Dorsolateral prefrontal cortex (tissue), 120 donors: ENCODE measurements at regions of chr20 and their contacts with region 1.

Region 1: DNA sequence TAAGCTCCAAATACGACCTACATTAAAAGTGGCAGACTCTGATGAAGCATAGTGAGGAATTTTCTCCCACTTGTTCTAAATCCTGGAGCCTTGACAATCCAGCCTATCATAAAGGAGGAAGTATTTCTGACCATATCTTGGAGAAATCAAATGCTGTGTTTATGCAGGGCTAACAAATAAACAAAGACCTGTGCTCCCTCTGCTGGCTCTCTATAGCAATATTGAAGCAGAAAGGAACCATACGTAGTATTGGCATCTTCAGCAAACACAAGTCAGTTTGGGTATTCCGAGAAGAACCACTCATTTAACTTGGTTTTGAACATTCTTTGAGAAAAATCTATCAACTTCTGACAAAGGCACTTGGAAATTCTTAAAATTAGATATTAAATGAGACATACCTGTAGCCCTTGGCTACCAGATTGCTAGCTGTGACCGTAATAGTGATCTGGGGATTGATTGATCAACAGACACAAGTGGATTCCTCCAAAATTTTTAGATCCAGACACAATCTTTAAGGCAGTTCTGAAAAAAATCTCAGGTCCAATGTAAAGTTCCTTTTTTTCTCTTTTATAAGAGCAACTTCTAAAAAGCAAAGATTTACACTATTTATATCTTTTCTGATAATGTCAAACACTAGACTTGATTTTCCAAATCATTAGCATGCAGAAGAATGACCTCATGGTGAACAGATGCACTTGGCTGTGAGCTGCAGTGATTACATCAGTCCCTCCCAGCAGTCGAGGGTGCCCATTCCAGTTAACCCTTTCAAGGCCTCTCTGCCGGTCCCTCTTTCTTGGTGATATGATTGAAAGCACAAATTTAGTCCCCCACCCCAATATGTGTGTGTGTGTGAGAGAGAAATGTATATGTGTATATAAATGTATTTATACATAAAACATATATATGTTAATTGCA is 40.2 kb downstream of the INSM1 start:
- DNase-seq: peak in 5 of 10 donors; percentile 36 to 68 (median 61)
- H3K4me3 ChIP-seq: peak overlapping the region in 14 of 59 donors; percentile 0 to 45 (median 18)
- H3K27ac ChIP-seq: peak overlapping the region in 54 of 59 donors; percentile 6 to 85 (median 57)
- H3K27me3 ChIP-seq: no peaks in the 10 kb centered on the region
- CTCF ChIP-seq: peak in 49 of 56 donors; percentile 17 to 58 (median 37)

Region 2: GRCh38 chr20:20267685-20268370 is 140.3 kb before region 1 on chr20:
- intact Hi-C with region 1: no loop called
- DNase-seq: no peak
- H3K4me3 ChIP-seq: no peak overlapping the region
- H3K27ac ChIP-seq: no peak overlapping the region
- H3K27me3 ChIP-seq: peaks cover 0 to 4% (median 0%) of the 10 kb centered on the region in 45 donors
- CTCF ChIP-seq: no peak

Region 3: GRCh38 chr20:20369250-20370093 is 38.7 kb before region 1 on chr20:
- intact Hi-C with region 1: loop called (anchors 2 kb)
- DNase-seq: peak in 4 of 10 donors; percentile 13 to 83 (median 54)
- H3K4me3 ChIP-seq: peak overlapping the region; percentile 32 to 76 (median 62)
- H3K27ac ChIP-seq: peak overlapping the region in 39 of 59 donors; percentile 32 to 94 (median 69)
- H3K27me3 ChIP-seq: peaks cover 0 to 59% (median 30%) of the 10 kb centered on the region in 45 donors
- CTCF ChIP-seq: peak in 17 of 56 donors; percentile 5 to 34 (median 20)

Region 4: GRCh38 chr20:20452254-20452676 is 44.1 kb after region 1 on chr20:
- intact Hi-C with region 1: loop called in 1 of 2 experiments (anchors 5 kb)
- DNase-seq: peak; percentile 66 to 98 (median 96)
- H3K4me3 ChIP-seq: peak overlapping the region in 53 of 59 donors; percentile 2 to 55 (median 31)
- H3K27ac ChIP-seq: peak overlapping the region in 58 of 59 donors; percentile 20 to 92 (median 82)
- H3K27me3 ChIP-seq: no peaks in the 10 kb centered on the region
- CTCF ChIP-seq: peak in 41 of 56 donors; percentile 9 to 62 (median 32)

Region 5: GRCh38 chr20:20547221-20547875 is 139.2 kb after region 1 on chr20:
- intact Hi-C with region 1: no loop called
- DNase-seq: no peak
- H3K4me3 ChIP-seq: no peak overlapping the region
- H3K27ac ChIP-seq: peak overlapping the region in 1 of 59 donors; percentile 84
- H3K27me3 ChIP-seq: no peaks in the 10 kb centered on the region
- CTCF ChIP-seq: no peak